ENCODE measurements at regions of chr19 and their contacts with region 1.

Region 1: GRCh38 chr19:925526-926322 is at the start of gene ARID3A:
- DNase-seq: no peak
- H3K4me3 ChIP-seq: peak within 1 kb of the TSS; percentile 72 to 87
- H3K27ac ChIP-seq: peak within 1 kb of the TSS; percentile 82
- H3K4me1 ChIP-seq: peaks cover 28% of the 10 kb centered on the region
- H3K27me3 ChIP-seq: no peaks in the 10 kb centered on the region
- CTCF ChIP-seq: no peak
- POLR2A ChIP-seq: peak in 1 of 2 donors; percentile 43
- total RNA-seq, gene ARID3A: 10.3 TPM

Region 2: GRCh38 chr19:771332-771785 is 154.4 kb before region 1 on chr19:
- intact Hi-C with region 1: loop called (anchors 5 kb)
- DNase-seq: no peak
- H3K4me3 ChIP-seq: no peak overlapping the region
- H3K27ac ChIP-seq: no peak overlapping the region
- H3K4me1 ChIP-seq: peaks cover 18% of the 10 kb centered on the region
- H3K27me3 ChIP-seq: no peaks in the 10 kb centered on the region
- CTCF ChIP-seq: peak in 1 of 3 experiments; percentile 22
- POLR2A ChIP-seq: no peak

Region 3: DNA sequence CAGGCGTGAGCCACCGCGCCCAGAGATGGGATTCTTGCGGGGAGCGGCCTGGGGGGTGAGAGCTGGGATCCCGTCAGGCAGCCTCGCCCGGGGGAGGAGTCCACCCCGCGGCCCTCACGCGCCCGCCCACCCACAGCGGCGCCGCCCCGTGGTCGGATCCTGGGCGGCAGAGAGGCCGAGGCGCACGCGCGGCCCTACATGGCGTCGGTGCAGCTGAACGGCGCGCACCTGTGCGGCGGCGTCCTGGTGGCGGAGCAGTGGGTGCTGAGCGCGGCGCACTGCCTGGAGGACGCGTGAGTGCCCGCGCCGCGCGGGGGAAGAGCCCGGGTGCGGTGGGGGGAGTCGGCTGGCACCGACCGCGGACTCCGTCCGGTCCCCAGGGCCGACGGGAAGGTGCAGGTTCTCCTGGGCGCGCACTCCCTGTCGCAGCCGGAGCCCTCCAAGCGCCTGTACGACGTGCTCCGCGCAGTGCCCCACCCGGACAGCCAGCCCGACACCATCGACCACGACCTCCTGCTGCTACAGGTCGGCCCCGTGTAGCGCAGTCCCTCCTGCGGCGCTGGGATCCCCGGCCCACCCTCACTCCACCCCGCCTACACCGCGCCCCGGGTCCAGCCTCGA is 65.1 kb before region 1 on chr19:
- intact Hi-C with region 1: loop called (anchors 5 kb)
- DNase-seq: no peak
- H3K4me3 ChIP-seq: peak overlapping the region; percentile 53 to 59
- H3K27ac ChIP-seq: peak overlapping the region; percentile 92
- H3K4me1 ChIP-seq: peaks cover 48% of the 10 kb centered on the region
- H3K27me3 ChIP-seq: no peaks in the 10 kb centered on the region
- CTCF ChIP-seq: no peak
- POLR2A ChIP-seq: peak in 1 of 2 donors; percentile 7

Region 4: GRCh38 chr19:958967-959820 is 33.5 kb after region 1 on chr19:
- intact Hi-C with region 1: no loop called
- DNase-seq: no peak
- H3K4me3 ChIP-seq: no peak overlapping the region
- H3K27ac ChIP-seq: no peak overlapping the region
- H3K4me1 ChIP-seq: peaks cover 14% of the 10 kb centered on the region
- H3K27me3 ChIP-seq: no peaks in the 10 kb centered on the region
- CTCF ChIP-seq: no peak
- POLR2A ChIP-seq: no peak

Region 5: GRCh38 chr19:984165-984967 is 58.6 kb after region 1 on chr19 and contains the start of gene WDR18:
- intact Hi-C with region 1: loop called (anchors 1 kb)
- DNase-seq: no peak
- H3K4me3 ChIP-seq: peak within 1 kb of the TSS; percentile 77 to 99
- H3K27ac ChIP-seq: peak within 1 kb of the TSS; percentile 86
- H3K4me1 ChIP-seq: peaks cover 30% of the 10 kb centered on the region
- H3K27me3 ChIP-seq: no peaks in the 10 kb centered on the region
- CTCF ChIP-seq: peak in 1 of 3 experiments; percentile 45
- POLR2A ChIP-seq: peak in 1 of 2 donors; percentile 47
- total RNA-seq, gene WDR18: 66.8 TPM

Region 6: DNA sequence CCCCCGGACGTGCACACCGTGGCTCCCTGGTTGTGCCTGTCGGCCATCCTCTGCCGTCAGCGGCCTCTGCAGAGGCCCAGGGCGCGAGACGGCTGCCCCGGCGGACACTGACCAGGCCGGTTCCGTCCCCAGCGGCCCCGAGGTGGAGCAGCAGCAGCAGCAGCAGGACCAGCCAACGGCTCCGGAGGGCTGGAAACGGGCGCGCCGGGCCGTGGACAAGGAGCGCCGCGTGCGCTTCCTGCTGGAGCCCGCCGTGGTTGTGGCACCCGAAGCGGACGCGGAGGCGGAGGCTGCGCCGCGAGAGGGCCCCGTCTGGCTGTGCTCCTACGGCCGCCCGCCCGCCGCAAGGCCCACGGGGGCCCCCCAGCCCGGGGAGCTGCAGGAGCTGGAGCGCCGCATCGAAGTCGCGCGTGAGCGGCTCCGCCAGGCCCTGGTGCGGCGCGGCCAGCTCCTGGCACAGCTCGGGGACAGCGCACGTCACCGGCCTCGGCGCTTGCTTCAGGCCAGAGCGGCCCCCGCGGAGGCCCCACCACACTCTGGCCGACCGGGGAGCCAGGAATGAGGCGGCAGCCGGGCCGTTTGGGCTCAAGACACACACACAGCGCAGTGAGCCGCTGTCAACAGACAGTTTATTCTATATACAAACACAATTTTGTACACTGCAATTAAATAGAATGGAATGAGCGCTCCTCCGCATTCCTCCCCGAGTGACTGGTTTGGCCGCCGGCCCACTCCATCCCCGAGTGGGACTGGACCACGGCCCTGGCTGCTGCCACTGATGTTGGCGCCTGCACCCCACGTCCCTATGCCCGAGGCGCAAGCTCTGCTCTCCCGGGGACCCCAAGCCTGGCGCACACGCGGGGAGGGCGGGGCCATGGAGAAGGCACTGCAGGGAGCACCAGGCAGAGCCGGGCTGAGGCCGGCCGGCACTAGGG is 83.6 kb after region 1 on chr19:
- intact Hi-C with region 1: no loop called
- DNase-seq: no peak
- H3K4me3 ChIP-seq: peak overlapping the region; percentile 24 to 43
- H3K27ac ChIP-seq: peak overlapping the region; percentile 77
- H3K4me1 ChIP-seq: peaks cover 15% of the 10 kb centered on the region
- H3K27me3 ChIP-seq: no peaks in the 10 kb centered on the region
- CTCF ChIP-seq: no peak
- POLR2A ChIP-seq: no peak

Region 7: DNA sequence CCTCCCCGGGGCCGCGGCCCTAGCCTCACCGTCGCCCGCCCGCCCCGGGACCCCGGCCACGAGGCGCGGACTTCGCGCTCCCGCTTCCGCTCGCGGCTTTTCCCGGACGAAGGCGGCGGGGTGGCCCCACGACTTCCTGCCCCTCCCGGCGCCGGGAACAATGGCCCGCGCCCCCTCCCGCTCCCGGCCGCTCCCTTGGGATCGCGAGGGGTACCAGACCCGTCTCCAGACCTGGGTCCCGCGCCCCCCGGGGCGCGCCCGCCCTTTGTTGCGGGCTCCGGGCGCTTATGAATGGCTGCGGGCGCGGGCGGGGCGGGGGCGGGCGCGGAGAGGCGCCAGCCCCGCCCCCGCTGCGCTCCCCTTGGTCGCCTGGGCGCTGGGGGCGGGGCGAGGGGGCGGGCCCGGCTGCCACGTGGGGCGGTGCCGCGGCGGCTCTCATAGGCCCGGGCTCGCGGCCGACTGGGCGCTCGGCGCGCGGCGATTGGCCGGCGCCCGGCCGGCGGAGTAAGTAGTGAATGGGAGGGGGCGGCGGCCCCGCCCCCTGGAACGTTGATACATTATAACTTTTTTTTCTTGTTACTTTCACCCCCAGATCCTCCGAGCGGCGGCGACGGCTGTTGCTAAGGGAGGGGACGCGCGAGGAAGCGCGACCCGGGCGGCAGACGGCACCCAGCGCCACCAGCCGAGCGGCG is 323.7 kb after region 1 on chr19:
- intact Hi-C with region 1: loop called (anchors 10 kb)
- DNase-seq: no peak
- H3K4me3 ChIP-seq: peak overlapping the region; percentile 79 to 85
- H3K27ac ChIP-seq: peak overlapping the region; percentile 100
- H3K4me1 ChIP-seq: peaks cover 58% of the 10 kb centered on the region
- H3K27me3 ChIP-seq: no peaks in the 10 kb centered on the region
- CTCF ChIP-seq: no peak
- POLR2A ChIP-seq: peak; percentile 37 to 98

Measured in vagina (tissue), 2 donors.